Natural killer cell (primary cell): ENCODE measurements at regions of chr15 and their contacts with region 1.

Region 1: GRCh38 chr15:82108489-82109078 is 62.8 kb upstream of the MEX3B start:
- DNase-seq: peak; percentile 48 to 67
- ATAC-seq: peak; percentile 81 to 98 (median 92)
- H3K4me3 ChIP-seq: no peak overlapping the region
- H3K4me3 Mint-ChIP-seq: no peak overlapping the region
- H3K27ac ChIP-seq: no peak overlapping the region
- H3K27ac Mint-ChIP-seq: no peak overlapping the region
- H3K4me1 ChIP-seq: no peaks in the 10 kb centered on the region
- H3K4me1 Mint-ChIP-seq: peaks cover 0 to 6% of the 10 kb centered on the region in 2 donors
- H3K27me3 ChIP-seq: no peaks in the 10 kb centered on the region
- H3K27me3 Mint-ChIP-seq: no peaks in the 10 kb centered on the region
- CTCF ChIP-seq: peak; percentile 68

Region 2: GRCh38 chr15:82064824-82065223 is 43.8 kb before region 1 on chr15:
- intact Hi-C with region 1: no loop called
- DNase-seq: no peak
- ATAC-seq: no peak
- H3K4me3 ChIP-seq: no peak overlapping the region
- H3K4me3 Mint-ChIP-seq: no peak overlapping the region
- H3K27ac ChIP-seq: no peak overlapping the region
- H3K27ac Mint-ChIP-seq: no peak overlapping the region
- H3K4me1 ChIP-seq: no peaks in the 10 kb centered on the region
- H3K4me1 Mint-ChIP-seq: no peaks in the 10 kb centered on the region
- H3K27me3 ChIP-seq: no peaks in the 10 kb centered on the region
- H3K27me3 Mint-ChIP-seq: peaks cover 23 to 49% of the 10 kb centered on the region in 2 donors
- CTCF ChIP-seq: no peak

Region 3: DNA sequence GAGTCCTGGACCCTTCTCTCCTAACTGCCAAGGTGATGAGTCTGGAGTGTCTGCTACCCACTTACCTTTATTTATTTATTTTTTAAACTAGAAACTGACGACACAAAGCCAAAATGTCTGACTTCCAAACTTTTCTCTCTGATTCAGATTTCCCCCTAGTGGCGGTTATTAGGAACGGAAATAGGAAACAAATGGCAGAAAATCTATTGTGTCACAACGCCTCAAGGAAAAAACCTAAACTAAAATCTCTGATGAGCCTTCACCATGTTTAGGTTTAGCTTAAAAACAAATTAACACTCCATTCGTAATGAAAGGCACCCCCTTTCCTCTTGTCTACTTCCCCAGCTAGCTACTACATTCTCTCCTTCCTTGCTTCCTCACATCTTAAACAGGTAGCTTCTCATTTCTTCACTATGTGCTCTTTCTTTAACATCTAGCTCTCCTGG is 31.3 kb after region 1 on chr15:
- intact Hi-C with region 1: loop called (anchors 2 kb)
- DNase-seq: peak in 1 of 2 donors; percentile 51
- ATAC-seq: peak in 1 of 3 donors; percentile 28
- H3K4me3 ChIP-seq: no peak overlapping the region
- H3K4me3 Mint-ChIP-seq: no peak overlapping the region
- H3K27ac ChIP-seq: no peak overlapping the region
- H3K27ac Mint-ChIP-seq: no peak overlapping the region
- H3K4me1 ChIP-seq: no peaks in the 10 kb centered on the region
- H3K4me1 Mint-ChIP-seq: no peaks in the 10 kb centered on the region
- H3K27me3 ChIP-seq: no peaks in the 10 kb centered on the region
- H3K27me3 Mint-ChIP-seq: no peaks in the 10 kb centered on the region
- CTCF ChIP-seq: peak; percentile 71

Region 4: DNA sequence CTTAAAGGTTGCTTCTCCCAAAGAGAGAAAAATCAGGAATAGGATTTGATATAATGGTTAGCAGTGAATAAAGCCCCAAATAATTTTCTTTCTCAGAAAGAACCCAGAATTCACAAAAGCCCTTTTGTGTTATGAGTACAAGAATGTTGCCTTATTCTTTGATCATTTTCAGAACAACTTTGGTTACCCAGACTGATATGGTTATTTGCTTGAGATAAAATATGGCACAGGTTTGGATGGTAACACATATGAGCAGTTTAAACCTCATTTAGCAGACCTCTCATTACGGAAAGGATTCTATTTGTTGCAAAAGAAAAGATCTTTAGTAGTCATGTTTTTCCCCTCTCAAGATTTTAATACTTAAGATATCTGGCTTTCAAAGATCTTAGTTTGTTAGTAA is 42.1 kb after region 1 on chr15:
- intact Hi-C with region 1: no loop called
- DNase-seq: no peak
- ATAC-seq: no peak
- H3K4me3 ChIP-seq: no peak overlapping the region
- H3K4me3 Mint-ChIP-seq: no peak overlapping the region
- H3K27ac ChIP-seq: no peak overlapping the region
- H3K27ac Mint-ChIP-seq: no peak overlapping the region
- H3K4me1 ChIP-seq: no peaks in the 10 kb centered on the region
- H3K4me1 Mint-ChIP-seq: no peaks in the 10 kb centered on the region
- H3K27me3 ChIP-seq: no peaks in the 10 kb centered on the region
- H3K27me3 Mint-ChIP-seq: no peaks in the 10 kb centered on the region
- CTCF ChIP-seq: no peak